ENCODE measurements at regions of chr18 and their contacts with region 1.

Region 1: DNA sequence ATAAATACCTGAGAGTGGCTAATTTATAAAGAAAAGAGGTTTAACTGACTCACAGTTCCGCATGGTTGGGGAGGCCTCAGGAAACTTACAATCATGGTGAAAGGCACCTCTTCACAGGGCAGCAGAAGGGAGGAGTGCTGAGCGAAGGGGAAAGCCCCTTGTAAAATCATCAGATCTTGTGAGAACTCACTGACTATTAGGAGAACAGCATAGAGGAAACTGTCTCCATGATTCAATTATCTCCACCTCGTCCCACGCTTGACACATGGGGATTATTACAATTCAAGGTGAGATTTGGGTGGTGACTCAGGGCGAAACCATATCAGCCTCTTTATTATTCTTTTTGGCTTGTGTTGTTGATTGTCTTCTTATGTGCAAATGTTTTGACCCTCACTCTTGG is 76.2 kb downstream of the WDR7 start:
- DNase-seq: no peak

Region 2: GRCh38 chr18:56748698-56749268 is 21.4 kb after region 1 on chr18:
- intact Hi-C with region 1: loop called in 1 of 2 experiments (anchors 1 kb)
- DNase-seq: no peak

Region 3: GRCh38 chr18:57970356-57971080 is 1243.1 kb after region 1 on chr18:
- intact Hi-C with region 1: loop called in 1 of 2 experiments (anchors 5 kb)
- DNase-seq: no peak